ENCODE measurements at regions of chr7 and their contacts with region 1.

Region 1: DNA sequence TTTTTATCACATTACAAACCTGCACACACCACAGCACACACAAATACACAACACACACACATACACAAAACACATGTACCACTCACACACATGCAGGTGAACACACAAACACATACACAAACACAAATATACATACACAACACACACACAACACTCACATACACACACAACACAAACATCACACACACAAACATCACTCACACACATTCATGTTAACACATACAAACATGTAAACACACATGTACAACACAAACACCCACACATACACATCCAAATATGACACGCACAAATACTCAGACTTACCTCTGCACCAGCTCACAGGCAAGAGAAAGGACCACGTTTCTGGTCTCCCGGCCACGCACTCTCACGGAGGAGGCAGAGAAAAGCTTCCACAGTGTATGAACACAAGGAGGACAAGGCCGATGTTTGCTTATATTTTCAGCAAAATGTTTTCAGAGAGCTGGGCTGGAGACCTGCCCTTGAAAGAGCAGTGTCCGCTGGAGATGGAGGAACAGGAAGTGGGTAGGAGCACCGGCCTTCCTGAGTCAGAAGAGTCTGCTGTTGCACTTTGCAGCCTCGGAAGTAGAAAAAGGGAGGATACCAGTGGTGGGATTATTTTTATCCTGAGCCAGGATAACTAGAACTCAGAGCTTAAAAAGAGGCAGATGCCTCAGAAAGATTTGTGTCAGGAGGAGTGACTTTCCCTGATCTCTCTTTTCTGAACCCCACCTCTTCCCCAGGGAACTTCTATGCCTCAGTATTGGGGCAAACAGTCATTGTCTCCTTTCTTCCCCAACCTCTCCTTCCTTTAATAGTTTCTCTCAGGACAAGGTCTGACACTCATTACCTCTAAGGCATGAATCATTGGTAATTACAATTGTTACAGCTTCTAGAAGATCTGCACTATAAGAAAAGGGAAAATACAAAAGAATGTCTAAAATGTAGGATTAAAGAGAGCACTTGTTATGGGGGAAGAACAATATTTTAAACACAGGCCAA is at the start of gene GIMAP6:
- DNase-seq: peak; percentile 85
- H3K4me3 Mint-ChIP-seq: peak within 1 kb of the TSS; percentile 93
- H3K27ac Mint-ChIP-seq: peak within 1 kb of the TSS; percentile 92
- H3K4me1 Mint-ChIP-seq: peaks cover 62% of the 10 kb centered on the region
- H3K27me3 Mint-ChIP-seq: no peaks in the 10 kb centered on the region
- total RNA-seq, gene GIMAP6: 35.5 and 35.8 TPM in 2 replicates

Region 2: GRCh38 chr7:150514748-150515222 is 117.4 kb before region 1 on chr7 and contains the start of gene GIMAP7:
- intact Hi-C with region 1: loop called (anchors 5 kb)
- DNase-seq: peak; percentile 93
- H3K4me3 Mint-ChIP-seq: peak within 1 kb of the TSS; percentile 99
- H3K27ac Mint-ChIP-seq: peak within 1 kb of the TSS; percentile 99
- H3K4me1 Mint-ChIP-seq: peaks cover 54% of the 10 kb centered on the region
- H3K27me3 Mint-ChIP-seq: no peaks in the 10 kb centered on the region
- total RNA-seq, gene GIMAP7: 40.5 and 45.0 TPM in 2 replicates

Region 3: GRCh38 chr7:150567169-150567568 is 65.0 kb before region 1 on chr7 and contains the start of gene GIMAP4:
- intact Hi-C with region 1: loop called (anchors 2 kb)
- DNase-seq: peak; percentile 77
- H3K4me3 Mint-ChIP-seq: peak within 1 kb of the TSS; percentile 86
- H3K27ac Mint-ChIP-seq: peak within 1 kb of the TSS; percentile 95
- H3K4me1 Mint-ChIP-seq: peaks cover 59% of the 10 kb centered on the region
- H3K27me3 Mint-ChIP-seq: no peaks in the 10 kb centered on the region
- total RNA-seq, gene GIMAP4: 61.1 and 62.7 TPM in 2 replicates

Region 4: GRCh38 chr7:150620617-150621371 is 11.4 kb before region 1 on chr7:
- intact Hi-C with region 1: loop called (anchors 1 kb)
- DNase-seq: peak; percentile 67
- H3K4me3 Mint-ChIP-seq: peak overlapping the region; percentile 63
- H3K27ac Mint-ChIP-seq: peak overlapping the region; percentile 85
- H3K4me1 Mint-ChIP-seq: peaks cover 51% of the 10 kb centered on the region
- H3K27me3 Mint-ChIP-seq: no peaks in the 10 kb centered on the region

Region 5: GRCh38 chr7:150716368-150716767 is 84.2 kb after region 1 on chr7 and contains the start of gene GIMAP1:
- intact Hi-C with region 1: loop called (anchors 5 kb)
- DNase-seq: peak; percentile 91
- H3K4me3 Mint-ChIP-seq: peak within 1 kb of the TSS; percentile 89
- H3K27ac Mint-ChIP-seq: peak within 1 kb of the TSS; percentile 87
- H3K4me1 Mint-ChIP-seq: peaks cover 52% of the 10 kb centered on the region
- H3K27me3 Mint-ChIP-seq: no peaks in the 10 kb centered on the region
- total RNA-seq, gene GIMAP1: 4.9 and 6.0 TPM in 2 replicates

Region 6: GRCh38 chr7:150941981-150942590 is 309.9 kb after region 1 on chr7:
- intact Hi-C with region 1: no loop called
- DNase-seq: peak; percentile 75
- H3K4me3 Mint-ChIP-seq: no peak overlapping the region
- H3K27ac Mint-ChIP-seq: no peak overlapping the region
- H3K4me1 Mint-ChIP-seq: peaks cover 9% of the 10 kb centered on the region
- H3K27me3 Mint-ChIP-seq: peaks cover 3% of the 10 kb centered on the region